Activated naive CD4-positive, alpha-beta T cell treated with anti-CD3 and anti-CD28 coated beads for 36 hours (primary cell): ENCODE measurements at regions of chr16 and their contacts with region 1.

Region 1: GRCh38 chr16:4253394-4254150 is 11.7 kb upstream of the SRL start:
- DNase-seq: peak; percentile 100
- H3K4me3 Mint-ChIP-seq: peak overlapping the region; percentile 99
- H3K27ac Mint-ChIP-seq: peak overlapping the region; percentile 98
- H3K4me1 Mint-ChIP-seq: peaks cover 8% of the 10 kb centered on the region
- H3K27me3 Mint-ChIP-seq: no peaks in the 10 kb centered on the region

Region 2: DNA sequence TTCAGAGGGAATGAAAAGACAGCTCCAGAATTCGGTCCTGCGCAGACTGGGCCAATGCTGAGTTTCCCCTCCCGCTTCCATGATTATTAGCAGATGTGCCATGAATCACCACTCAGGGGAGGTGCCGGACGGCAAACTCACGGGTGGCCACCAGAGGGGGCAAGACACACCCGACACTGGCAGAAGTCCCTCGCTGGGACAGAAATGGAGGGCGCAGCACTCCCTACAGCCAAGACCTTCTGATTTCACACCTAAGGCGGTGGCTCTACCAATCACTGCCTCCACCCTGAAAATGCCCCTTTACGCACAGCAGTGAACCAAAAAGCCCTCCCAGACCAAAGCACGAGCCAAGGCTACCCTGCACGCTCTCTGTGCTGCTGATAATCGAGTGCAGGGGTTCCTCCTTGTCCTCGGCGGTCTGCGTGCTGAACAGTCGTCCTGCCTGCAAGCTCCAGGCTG is 563.1 kb before region 1 on chr16:
- CTCF ChIA-PET with region 1: no interaction called
- intact Hi-C with region 1: loop called (anchors 1 kb)
- DNase-seq: peak; percentile 93
- H3K4me3 Mint-ChIP-seq: no peak overlapping the region
- H3K27ac Mint-ChIP-seq: no peak overlapping the region
- H3K4me1 Mint-ChIP-seq: peaks cover 9% of the 10 kb centered on the region
- H3K27me3 Mint-ChIP-seq: no peaks in the 10 kb centered on the region

Region 3: DNA sequence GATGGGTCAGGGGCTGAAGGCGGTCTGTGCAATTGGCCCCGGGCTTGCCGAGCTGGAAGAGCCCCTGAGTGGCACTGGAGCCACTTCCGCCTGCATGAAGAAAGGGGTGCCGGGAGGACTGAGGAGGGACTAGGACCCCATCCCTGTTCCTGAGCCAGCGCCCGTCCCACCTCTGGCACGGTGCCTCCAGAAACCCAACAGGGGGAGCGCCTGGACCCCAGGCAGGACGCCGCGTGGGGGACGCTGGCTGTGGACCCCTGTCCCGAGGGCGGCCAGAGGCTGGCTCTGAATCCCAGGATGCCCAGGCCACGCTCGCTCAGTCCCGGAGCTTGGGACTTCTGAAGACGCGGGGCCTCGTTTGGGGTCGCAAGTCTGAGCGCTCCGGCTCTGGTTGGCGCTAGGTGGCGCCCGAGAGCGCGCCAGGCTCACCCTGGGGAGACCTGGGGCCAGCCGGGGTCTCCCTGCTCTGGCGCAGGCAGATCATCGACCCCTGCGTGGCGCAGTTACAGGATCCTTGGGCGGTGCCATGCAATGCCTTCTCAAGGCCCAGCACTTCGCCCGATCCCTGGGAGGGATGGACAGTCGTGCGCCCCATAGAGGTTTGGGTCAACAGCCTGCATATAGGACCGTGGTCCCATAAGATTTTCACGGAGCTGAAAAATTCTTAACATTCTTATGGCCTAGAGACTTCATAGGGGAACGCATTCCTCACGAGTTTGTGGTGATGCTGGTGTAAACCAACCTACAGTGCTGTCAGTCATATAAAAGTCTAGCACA is 314.5 kb before region 1 on chr16:
- CTCF ChIA-PET with region 1: interaction called, 23 read pairs
- intact Hi-C with region 1: loop called (anchors 1 kb)
- DNase-seq: peak; percentile 66
- H3K4me3 Mint-ChIP-seq: peak overlapping the region; percentile 21
- H3K27ac Mint-ChIP-seq: no peak overlapping the region
- H3K4me1 Mint-ChIP-seq: peaks cover 1% of the 10 kb centered on the region
- H3K27me3 Mint-ChIP-seq: peaks cover 4% of the 10 kb centered on the region

Region 4: GRCh38 chr16:4116337-4117249 is 137.0 kb before region 1 on chr16 and contains the start of gene ADCY9:
- CTCF ChIA-PET with region 1: interaction called, 13 read pairs
- intact Hi-C with region 1: loop called (anchors 1 kb)
- DNase-seq: peak; percentile 71
- H3K4me3 Mint-ChIP-seq: peak within 1 kb of the TSS; percentile 86
- H3K27ac Mint-ChIP-seq: peak within 1 kb of the TSS; percentile 63
- H3K4me1 Mint-ChIP-seq: peaks cover 39% of the 10 kb centered on the region
- H3K27me3 Mint-ChIP-seq: peaks cover 2% of the 10 kb centered on the region
- total RNA-seq, gene ADCY9: 6.5 to 7.1 TPM

Region 5: GRCh38 chr16:4271176-4272066 is 17.8 kb after region 1 on chr16:
- CTCF ChIA-PET with region 1: interaction called, 24 read pairs
- intact Hi-C with region 1: loop called (anchors 1 kb)
- DNase-seq: peak; percentile 95
- H3K4me3 Mint-ChIP-seq: peak overlapping the region; percentile 86
- H3K27ac Mint-ChIP-seq: peak overlapping the region; percentile 94
- H3K4me1 Mint-ChIP-seq: peaks cover 12% of the 10 kb centered on the region
- H3K27me3 Mint-ChIP-seq: no peaks in the 10 kb centered on the region

Region 6: DNA sequence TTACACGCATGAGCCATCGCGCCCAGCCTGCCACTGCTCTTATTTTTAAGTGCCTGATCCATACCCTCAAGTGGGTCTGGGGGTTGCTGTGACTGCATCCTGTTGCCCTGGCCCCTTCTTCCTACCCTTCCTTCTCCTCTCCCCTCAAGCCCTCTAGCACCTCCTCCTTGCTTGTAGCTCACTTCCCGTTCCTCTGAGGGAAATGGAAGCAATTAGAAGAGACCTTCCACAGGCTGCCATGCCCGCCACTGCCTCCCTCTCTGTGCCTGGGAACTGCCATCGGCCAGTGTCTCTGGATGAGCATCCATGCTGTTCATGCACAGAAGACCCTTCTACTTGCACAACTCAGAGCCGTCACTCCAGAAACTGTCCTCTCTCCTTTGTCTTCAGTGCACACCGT is 29.9 kb after region 1 on chr16:
- CTCF ChIA-PET with region 1: no interaction called
- intact Hi-C with region 1: no loop called
- DNase-seq: no peak
- H3K4me3 Mint-ChIP-seq: no peak overlapping the region
- H3K27ac Mint-ChIP-seq: no peak overlapping the region
- H3K4me1 Mint-ChIP-seq: peaks cover 6% of the 10 kb centered on the region
- H3K27me3 Mint-ChIP-seq: peaks cover 9% of the 10 kb centered on the region

Region 7: GRCh38 chr16:4624015-4624826 is 370.6 kb after region 1 on chr16 and contains the start of gene MGRN1:
- CTCF ChIA-PET with region 1: no interaction called
- intact Hi-C with region 1: no loop called
- DNase-seq: peak; percentile 96
- H3K4me3 Mint-ChIP-seq: peak within 1 kb of the TSS; percentile 97
- H3K27ac Mint-ChIP-seq: peak within 1 kb of the TSS; percentile 99
- H3K4me1 Mint-ChIP-seq: peaks cover 30% of the 10 kb centered on the region
- H3K27me3 Mint-ChIP-seq: no peaks in the 10 kb centered on the region
- total RNA-seq, gene MGRN1: 46.3 to 48.8 TPM

Region 8: GRCh38 chr16:4869147-4869805 is 615.7 kb after region 1 on chr16:
- CTCF ChIA-PET with region 1: no interaction called
- intact Hi-C with region 1: no loop called
- DNase-seq: no peak
- H3K4me3 Mint-ChIP-seq: no peak overlapping the region
- H3K27ac Mint-ChIP-seq: no peak overlapping the region
- H3K4me1 Mint-ChIP-seq: peaks cover 2% of the 10 kb centered on the region
- H3K27me3 Mint-ChIP-seq: no peaks in the 10 kb centered on the region

Region 9: GRCh38 chr16:4924593-4925378 is 671.2 kb after region 1 on chr16:
- CTCF ChIA-PET with region 1: no interaction called
- intact Hi-C with region 1: no loop called
- DNase-seq: no peak
- H3K4me3 Mint-ChIP-seq: no peak overlapping the region
- H3K27ac Mint-ChIP-seq: no peak overlapping the region
- H3K4me1 Mint-ChIP-seq: no peaks in the 10 kb centered on the region
- H3K27me3 Mint-ChIP-seq: peaks cover 3% of the 10 kb centered on the region

Region 10: DNA sequence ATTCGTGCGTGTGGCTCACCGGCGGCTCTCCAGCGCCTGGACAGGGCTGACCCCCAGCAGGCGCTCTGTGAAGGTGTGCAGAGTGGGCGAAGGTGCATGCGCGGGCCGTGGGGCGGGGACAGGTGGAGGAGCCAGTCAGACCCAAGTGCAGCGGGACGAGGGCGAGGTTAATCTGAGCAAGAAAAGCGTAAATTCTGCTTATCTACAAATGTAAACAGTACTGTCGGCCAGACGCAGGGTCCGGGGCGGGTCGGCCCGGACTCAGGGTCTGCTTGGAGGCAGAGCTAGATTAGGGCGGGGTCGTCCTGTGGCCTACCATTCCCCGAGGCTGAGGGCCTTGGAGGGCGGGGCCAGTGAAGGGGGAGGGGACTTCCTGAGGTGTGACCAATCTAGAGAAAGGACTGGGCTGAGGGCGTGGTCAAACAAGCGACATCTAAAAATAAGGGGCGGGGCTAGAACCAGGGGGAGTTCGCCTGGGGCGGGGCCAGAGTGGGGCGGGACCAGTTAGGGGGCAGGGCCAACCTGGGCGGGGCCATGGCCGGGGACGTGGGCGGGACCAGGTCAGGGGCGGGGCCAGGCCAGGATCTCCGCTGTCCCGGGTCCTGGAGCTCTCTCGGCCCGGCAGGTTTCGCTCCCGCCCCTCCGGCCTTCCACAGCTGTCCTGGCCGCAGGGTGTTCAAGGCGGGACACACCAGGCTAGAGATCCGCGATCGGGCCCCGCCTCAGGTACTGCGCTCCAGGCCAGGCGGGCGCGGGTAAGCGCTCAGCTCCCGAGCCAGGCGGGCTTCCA is 704.3 kb after region 1 on chr16 and contains the start of gene SEC14L5:
- CTCF ChIA-PET with region 1: no interaction called
- intact Hi-C with region 1: loop called (anchors 10 kb)
- DNase-seq: peak; percentile 96
- H3K4me3 Mint-ChIP-seq: peak within 1 kb of the TSS; percentile 78
- H3K27ac Mint-ChIP-seq: no peak within 1 kb of the TSS
- H3K4me1 Mint-ChIP-seq: peaks cover 14% of the 10 kb centered on the region
- H3K27me3 Mint-ChIP-seq: peaks cover 30% of the 10 kb centered on the region
- total RNA-seq, gene SEC14L5: not detected